ENCODE measurements at regions of chr20 and their contacts with region 1.

Region 1: GRCh38 chr20:54093423-54094267 is 23.3 kb upstream of the BCAS1 start:
- DNase-seq: no peak
- H3K4me3 ChIP-seq: no peak overlapping the region
- CTCF ChIP-seq: no peak

Region 2: GRCh38 chr20:54110041-54110841 is 16.6 kb after region 1 on chr20:
- CTCF ChIA-PET with region 1: interaction called, 104 read pairs
- POLR2A ChIA-PET with region 1: no interaction called
- DNase-seq: no peak
- H3K4me3 ChIP-seq: no peak overlapping the region
- CTCF ChIP-seq: no peak

Region 3: DNA sequence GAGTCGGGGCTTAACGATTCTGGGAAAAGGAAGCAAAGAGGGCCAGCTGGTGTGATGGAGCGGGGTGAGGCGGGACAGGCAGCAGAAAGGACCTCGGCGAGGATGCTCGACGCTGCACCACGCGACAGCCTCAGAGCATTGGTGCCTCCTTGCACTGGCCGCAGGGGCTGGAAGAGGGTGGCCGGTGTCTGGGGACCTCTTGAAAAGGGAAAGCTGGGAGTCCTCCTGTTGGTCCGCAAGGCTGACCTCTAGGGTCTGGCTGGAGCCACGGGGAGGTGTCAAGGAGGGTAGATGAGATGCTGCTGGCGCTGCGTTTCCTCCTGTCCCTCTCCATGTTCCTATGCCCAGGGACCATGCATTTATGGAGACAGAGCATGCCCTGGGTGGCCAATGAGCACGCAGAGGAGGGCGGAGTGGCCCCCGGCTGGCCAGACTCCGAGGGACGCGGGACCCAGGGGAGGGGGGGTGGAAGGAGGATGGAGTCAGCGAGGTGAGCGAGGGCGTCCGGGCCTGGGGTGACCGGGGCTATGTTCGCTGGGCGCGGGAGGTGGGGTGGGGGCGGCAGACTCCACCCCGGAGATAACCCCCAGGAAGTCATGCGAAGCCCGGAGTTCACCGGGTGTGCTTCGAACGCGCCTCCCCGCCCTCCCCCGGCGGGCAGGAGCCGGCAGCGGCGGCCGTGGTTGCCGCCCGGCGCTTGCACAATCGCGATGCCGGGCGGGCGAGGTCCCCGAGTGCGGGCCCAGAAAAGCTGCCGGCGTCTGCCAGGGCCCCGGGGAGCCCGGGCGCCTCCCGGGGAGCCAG is 80.2 kb after region 1 on chr20 and contains the start of gene CYP24A1:
- CTCF ChIA-PET with region 1: interaction called, 10 read pairs
- POLR2A ChIA-PET with region 1: no interaction called
- DNase-seq: no peak
- H3K4me3 ChIP-seq: peak within 1 kb of the TSS; percentile 25
- CTCF ChIP-seq: no peak

Region 4: GRCh38 chr20:54179946-54180345 is 86.3 kb after region 1 on chr20:
- CTCF ChIA-PET with region 1: interaction called, 11 read pairs
- POLR2A ChIA-PET with region 1: no interaction called
- DNase-seq: no peak
- H3K4me3 ChIP-seq: no peak overlapping the region
- CTCF ChIP-seq: no peak

Region 5: GRCh38 chr20:54188132-54188849 is 94.6 kb after region 1 on chr20:
- CTCF ChIA-PET with region 1: interaction called, 48 read pairs
- POLR2A ChIA-PET with region 1: no interaction called
- DNase-seq: no peak
- H3K4me3 ChIP-seq: no peak overlapping the region
- CTCF ChIP-seq: no peak

Region 6: DNA sequence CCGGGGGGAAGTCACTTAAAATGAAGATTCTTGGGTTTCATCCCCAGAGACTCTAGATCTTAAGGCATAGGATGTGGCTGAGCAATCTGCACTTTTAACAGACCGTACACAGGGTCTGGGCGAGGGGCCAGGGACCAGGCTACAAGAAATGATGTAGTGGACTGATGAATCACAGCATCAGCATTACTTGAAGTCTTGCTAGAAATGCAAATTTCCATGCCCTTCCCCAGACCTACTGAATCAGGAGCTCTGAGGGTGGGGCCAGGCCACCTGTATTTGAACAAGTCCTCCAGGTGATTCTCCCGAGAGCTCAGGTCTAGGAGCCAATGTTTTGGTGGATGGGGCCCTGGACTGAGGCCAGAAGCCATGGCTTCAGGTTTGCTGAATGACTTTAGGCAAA is 550.1 kb after region 1 on chr20:
- CTCF ChIA-PET with region 1: interaction called, 17 read pairs
- POLR2A ChIA-PET with region 1: no interaction called
- DNase-seq: peak; percentile 62
- H3K4me3 ChIP-seq: no peak overlapping the region
- CTCF ChIP-seq: no peak

Measured in AG04449 (cell line).